Activated CD8-positive, alpha-beta T cell treated with anti-CD3 and anti-CD28 coated beads, Interleukin-2, amount 10 ng/mL, durations not matched to agents 7 days and 5 days (primary cell): ENCODE measurements at regions of chr2 and their contacts with region 1.

Region 1: DNA sequence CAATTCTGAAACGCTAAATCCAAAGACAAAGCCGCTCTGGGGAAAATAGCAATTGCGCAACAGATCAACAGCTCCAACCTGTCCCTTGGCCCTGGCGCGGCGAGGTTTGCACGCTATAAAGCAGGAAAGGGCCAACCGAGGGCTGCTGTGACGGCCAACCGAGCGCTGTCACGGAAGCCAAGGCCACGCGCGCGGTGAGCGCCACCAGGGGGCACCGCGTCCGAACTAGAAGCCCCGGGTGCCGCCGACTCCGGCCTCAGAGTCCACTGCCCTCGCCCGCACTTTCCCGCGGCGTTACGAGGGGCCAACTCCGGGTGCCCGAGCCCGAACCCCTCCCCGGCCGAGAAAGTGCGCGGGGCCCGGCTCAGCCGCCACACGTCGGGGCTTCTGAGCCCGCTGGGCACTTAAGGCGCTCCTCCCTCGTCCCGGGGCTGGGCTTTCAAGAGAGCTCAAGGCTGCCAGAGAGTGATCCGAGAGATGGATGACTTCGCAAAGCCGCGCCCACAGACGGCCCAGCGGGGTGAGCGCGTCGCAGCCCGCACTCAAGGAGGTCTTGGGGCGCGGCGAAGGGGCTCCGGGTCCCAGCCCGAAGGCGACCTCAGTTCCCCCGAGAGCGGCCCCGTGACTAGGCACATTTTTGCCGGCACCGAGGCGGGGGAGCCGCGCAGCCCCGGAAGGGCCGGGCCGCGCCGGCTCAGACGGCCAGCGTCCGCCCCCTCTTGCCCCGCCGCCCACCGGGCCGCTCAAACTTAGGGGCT is 897 bp downstream of the NFE2L2 start:
- DNase-seq: peak; percentile 95
- ATAC-seq: peak; percentile 68
- H3K4me3 Mint-ChIP-seq: peak overlapping the region; percentile 86
- H3K27ac Mint-ChIP-seq: peak overlapping the region; percentile 100
- H3K4me1 Mint-ChIP-seq: peaks cover 52% of the 10 kb centered on the region
- H3K27me3 Mint-ChIP-seq: no peaks in the 10 kb centered on the region

Region 2: GRCh38 chr2:177169810-177170514 is 93.7 kb before region 1 on chr2:
- CTCF ChIA-PET with region 1: interaction called, 105 read pairs
- POLR2A ChIA-PET with region 1: interaction called, 58 read pairs
- DNase-seq: peak; percentile 37
- ATAC-seq: peak; percentile 67
- H3K4me3 Mint-ChIP-seq: no peak overlapping the region
- H3K27ac Mint-ChIP-seq: peak overlapping the region; percentile 66
- H3K4me1 Mint-ChIP-seq: peaks cover 37% of the 10 kb centered on the region
- H3K27me3 Mint-ChIP-seq: peaks cover 3% of the 10 kb centered on the region

Region 3: DNA sequence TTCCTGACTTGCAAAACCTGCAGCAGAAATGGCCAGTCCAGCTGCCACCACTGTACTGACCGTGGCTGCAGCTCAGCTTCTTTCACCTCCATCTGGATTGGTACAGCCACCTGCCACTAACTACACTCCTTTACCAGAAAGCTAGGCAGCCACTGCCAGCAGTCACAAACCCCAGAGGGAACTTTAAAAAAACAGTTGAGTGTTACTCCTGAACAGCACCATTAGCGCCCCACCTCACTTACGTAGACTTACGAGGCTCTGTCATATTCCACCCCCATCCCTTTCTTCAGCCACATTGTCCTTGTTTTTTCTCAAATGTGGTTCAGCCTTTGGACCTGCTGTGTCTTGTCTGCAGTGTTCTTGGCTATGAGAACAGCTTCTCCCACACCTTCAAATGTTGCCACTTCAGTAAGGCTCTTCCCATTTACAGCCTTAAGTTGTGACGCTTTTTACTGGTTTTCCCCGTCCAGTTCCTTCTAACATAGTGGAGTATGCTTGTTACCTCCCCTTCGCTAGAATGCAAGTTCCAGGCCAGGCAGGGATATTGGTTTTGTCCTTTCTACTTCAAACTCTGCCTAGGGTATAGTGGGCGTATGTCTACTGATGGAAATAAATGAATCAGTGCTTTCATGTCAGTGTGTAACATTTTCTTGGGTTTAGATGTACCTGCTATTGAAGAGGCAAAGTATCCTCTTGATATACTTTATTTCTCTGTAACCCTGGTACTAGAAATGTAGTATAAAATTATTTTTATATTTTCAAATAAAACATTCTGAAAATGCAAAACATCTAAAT is 34.0 kb before region 1 on chr2:
- CTCF ChIA-PET with region 1: interaction called, 21 read pairs
- POLR2A ChIA-PET with region 1: interaction called, 25 read pairs
- DNase-seq: no peak
- ATAC-seq: peak; percentile 12
- H3K4me3 Mint-ChIP-seq: no peak overlapping the region
- H3K27ac Mint-ChIP-seq: peak overlapping the region; percentile 13
- H3K4me1 Mint-ChIP-seq: peaks cover 4% of the 10 kb centered on the region
- H3K27me3 Mint-ChIP-seq: no peaks in the 10 kb centered on the region

Region 4: GRCh38 chr2:177281400-177282180 is 18.0 kb after region 1 on chr2:
- CTCF ChIA-PET with region 1: interaction called, 136 read pairs
- POLR2A ChIA-PET with region 1: interaction called, 74 read pairs
- DNase-seq: peak; percentile 43
- ATAC-seq: peak; percentile 55
- H3K4me3 Mint-ChIP-seq: no peak overlapping the region
- H3K27ac Mint-ChIP-seq: peak overlapping the region; percentile 19
- H3K4me1 Mint-ChIP-seq: peaks cover 50% of the 10 kb centered on the region
- H3K27me3 Mint-ChIP-seq: no peaks in the 10 kb centered on the region

Region 5: GRCh38 chr2:177306550-177306949 is 42.9 kb after region 1 on chr2:
- CTCF ChIA-PET with region 1: interaction called, 30 read pairs
- POLR2A ChIA-PET with region 1: interaction called, 42 read pairs
- DNase-seq: no peak
- ATAC-seq: no peak
- H3K4me3 Mint-ChIP-seq: no peak overlapping the region
- H3K27ac Mint-ChIP-seq: no peak overlapping the region
- H3K4me1 Mint-ChIP-seq: peaks cover 33% of the 10 kb centered on the region
- H3K27me3 Mint-ChIP-seq: no peaks in the 10 kb centered on the region

Region 6: GRCh38 chr2:177332041-177332991 is 68.7 kb after region 1 on chr2:
- CTCF ChIA-PET with region 1: interaction called, 84 read pairs
- POLR2A ChIA-PET with region 1: interaction called, 25 read pairs
- DNase-seq: peak; percentile 69
- ATAC-seq: peak; percentile 82
- H3K4me3 Mint-ChIP-seq: no peak overlapping the region
- H3K27ac Mint-ChIP-seq: no peak overlapping the region
- H3K4me1 Mint-ChIP-seq: peaks cover 15% of the 10 kb centered on the region
- H3K27me3 Mint-ChIP-seq: no peaks in the 10 kb centered on the region